ENCODE measurements at regions of chr17 and their contacts with region 1.

Region 1: DNA sequence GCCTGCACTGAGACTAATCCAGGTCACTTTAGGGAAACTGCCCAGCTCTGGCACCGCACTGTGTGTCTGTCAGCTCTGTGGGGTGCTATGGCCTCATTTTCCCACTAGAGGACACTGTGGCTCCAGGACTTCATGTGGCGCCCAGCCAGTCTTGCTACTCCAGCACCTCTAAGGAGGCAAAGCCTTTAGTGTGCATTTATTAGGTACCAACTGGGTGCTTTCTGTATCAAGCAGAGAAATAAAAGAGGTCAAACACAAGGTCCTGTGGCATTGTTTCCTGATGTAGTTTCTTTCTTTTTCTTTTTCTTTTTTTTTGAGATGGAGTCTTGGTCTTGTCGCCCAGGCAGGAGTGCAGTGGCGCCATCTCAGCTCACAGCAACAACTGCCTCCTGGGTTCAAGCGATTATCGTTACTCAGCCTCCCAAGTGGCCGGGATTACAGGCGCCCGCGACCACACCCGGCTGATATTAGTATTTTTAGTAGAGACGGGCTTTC is 12.5 kb upstream of the RHBDL3 start:
- DNase-seq: peak; percentile 65
- ATAC-seq: peak; percentile 97
- H3K4me3 ChIP-seq: no peak overlapping the region
- H3K27ac ChIP-seq: no peak overlapping the region
- H3K4me1 ChIP-seq: peaks cover 5% of the 10 kb centered on the region; the same call in 1 of the 2 replicates
- H3K27me3 ChIP-seq: peaks cover 4% of the 10 kb centered on the region; the same call in 1 of the 2 replicates
- CTCF ChIP-seq: peak; percentile 98
- POLR2A ChIP-seq: no peak
- RAD21 ChIP-seq: peak; percentile 99

Region 2: DNA sequence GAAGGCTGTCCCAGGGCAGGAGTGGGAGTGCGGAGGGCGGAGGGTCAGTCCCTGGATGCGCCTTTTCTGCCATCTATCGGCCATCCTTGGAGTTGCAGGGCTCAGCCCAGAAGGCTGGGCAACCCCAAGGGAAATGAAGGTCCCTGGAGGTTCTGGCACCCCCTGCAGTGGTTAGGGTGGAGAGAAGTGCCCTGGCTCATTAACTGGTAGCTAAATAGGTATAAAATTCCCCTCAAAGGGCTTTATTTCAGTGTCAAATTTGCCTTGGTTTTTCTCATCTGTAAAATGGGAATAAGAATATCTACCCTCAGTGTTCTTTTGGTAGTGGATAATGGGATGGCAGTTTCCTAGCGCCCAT is 66.4 kb after region 1 on chr17:
- CTCF ChIA-PET with region 1: interaction called, 6 read pairs
- POLR2A ChIA-PET with region 1: no interaction called
- dilution Hi-C with region 1: no loop called
- in situ Hi-C with region 1: no loop called
- intact Hi-C with region 1: loop called (anchors 1 kb)
- DNase-seq: peak; percentile 41
- ATAC-seq: peak; percentile 99
- H3K4me3 ChIP-seq: no peak overlapping the region
- H3K27ac ChIP-seq: no peak overlapping the region
- H3K4me1 ChIP-seq: no peaks in the 10 kb centered on the region
- H3K27me3 ChIP-seq: peaks cover 19% of the 10 kb centered on the region
- CTCF ChIP-seq: peak; percentile 96
- POLR2A ChIP-seq: no peak
- RAD21 ChIP-seq: peak; percentile 91

Measured in IMR-90 (cell line).